Activated T-helper 1 cell treated with anti-CD3 and anti-CD28 coated beads, Interleukin-12 subunit alpha, Interleukin-12 subunit beta, Interleukin-2, Interleukin-4 antibody, amounts not matched to agents 30 ng/mL and 10 ng/mL and 1 ng/mL, durations not matched to agents 14 hours and 24 hours and 36 hours (primary cell): ENCODE measurements at regions of chr18 and their contacts with region 1.

Region 1: DNA sequence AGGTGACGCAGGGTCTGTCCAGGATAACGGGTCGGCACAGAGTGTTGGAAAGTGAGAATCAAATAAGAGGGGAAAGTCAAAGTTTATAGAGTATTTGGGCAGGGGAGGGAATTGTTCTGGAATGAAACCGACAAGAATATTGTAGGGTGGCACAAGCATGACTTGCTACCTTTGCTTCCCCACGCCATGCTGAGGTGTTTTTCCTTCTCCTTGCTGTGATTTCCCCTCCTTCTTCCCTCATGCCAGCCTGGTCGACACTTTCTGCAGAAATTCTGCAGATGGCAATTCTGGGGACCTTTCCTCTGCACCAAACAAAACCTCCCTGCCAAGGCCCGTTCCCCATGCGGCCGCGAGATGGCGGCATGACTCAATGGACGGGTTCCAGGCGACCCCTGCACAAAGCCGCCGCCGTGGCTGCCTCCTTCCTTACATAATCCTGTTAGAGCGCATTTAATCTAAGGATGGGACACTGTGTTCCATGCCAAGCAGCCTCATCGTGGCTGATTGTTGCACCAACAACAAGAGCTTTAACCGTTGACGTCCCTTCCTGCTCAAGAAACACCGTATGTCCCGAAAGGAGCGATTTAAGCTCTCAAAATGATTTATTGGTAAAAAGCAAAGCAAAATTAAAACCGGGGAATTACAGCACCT is at the start of gene MRO:
- DNase-seq: peak; percentile 67
- H3K4me3 Mint-ChIP-seq: no peak within 1 kb of the TSS
- H3K27ac Mint-ChIP-seq: no peak within 1 kb of the TSS
- H3K4me1 Mint-ChIP-seq: no peaks in the 10 kb centered on the region
- H3K27me3 Mint-ChIP-seq: peaks cover 6% of the 10 kb centered on the region
- total RNA-seq, gene MRO: not detected in 2 replicates

Region 2: GRCh38 chr18:50707855-50708469 is 111.9 kb before region 1 on chr18:
- intact Hi-C with region 1: no loop called
- DNase-seq: no peak
- H3K4me3 Mint-ChIP-seq: no peak overlapping the region
- H3K27ac Mint-ChIP-seq: no peak overlapping the region
- H3K4me1 Mint-ChIP-seq: no peaks in the 10 kb centered on the region
- H3K27me3 Mint-ChIP-seq: peaks cover 2% of the 10 kb centered on the region

Region 3: DNA sequence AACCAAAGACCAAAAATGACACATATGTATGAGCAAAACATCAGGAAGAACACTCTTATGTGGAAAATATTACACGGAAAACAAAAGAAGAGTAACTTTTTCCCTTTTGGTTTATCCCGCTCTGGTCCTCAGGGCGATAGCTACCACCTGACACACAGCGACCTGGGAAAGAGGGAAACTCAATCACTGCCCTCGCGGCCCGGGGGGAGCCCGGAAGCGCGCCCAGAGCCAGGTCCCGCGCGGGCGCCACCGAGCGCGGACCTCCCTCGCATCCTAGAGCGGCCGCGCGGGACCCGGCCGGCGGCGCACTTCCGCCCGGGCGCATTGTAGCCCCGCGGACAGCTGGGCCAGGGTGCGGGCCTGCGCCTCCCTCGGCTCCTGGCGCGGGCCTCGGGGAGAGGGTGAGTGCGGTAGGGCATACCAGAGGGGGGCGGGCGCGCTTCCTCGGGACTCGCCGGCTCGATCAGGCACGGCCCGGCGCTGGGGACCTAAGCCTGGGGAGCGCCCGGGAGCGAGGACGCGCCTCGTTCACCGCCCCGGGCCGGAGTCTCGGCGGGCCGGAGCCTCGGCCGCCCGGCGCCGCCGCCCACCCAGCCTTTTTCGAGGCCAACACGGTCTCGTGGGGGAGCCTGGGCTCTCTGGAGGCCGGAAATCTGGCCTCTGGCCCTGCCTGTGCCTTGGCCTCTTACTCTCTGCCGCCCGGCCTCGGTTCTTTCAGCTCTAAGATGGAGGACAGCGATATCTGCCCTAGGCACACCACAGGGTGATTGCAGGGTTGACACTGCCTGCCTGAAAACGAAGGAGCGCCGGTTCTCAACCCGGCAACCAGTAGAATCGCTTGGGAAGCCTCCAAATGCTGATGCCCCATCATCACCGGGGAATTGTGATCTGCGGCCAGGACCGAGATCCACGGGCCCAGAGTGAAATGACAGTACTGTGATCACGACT is 148.1 kb after region 1 on chr18 and contains the start of gene ELAC1:
- intact Hi-C with region 1: loop called (anchors 5 kb)
- DNase-seq: peak; percentile 60
- H3K4me3 Mint-ChIP-seq: peak within 1 kb of the TSS; percentile 96
- H3K27ac Mint-ChIP-seq: peak within 1 kb of the TSS; percentile 94
- H3K4me1 Mint-ChIP-seq: peaks cover 22% of the 10 kb centered on the region
- H3K27me3 Mint-ChIP-seq: peaks cover 2% of the 10 kb centered on the region
- total RNA-seq, gene ELAC1: 6.7 and 7.7 TPM in 2 replicates

Region 4: GRCh38 chr18:51029694-51030536 is 210.1 kb after region 1 on chr18 and contains the start of gene SMAD4:
- intact Hi-C with region 1: loop called (anchors 1 kb)
- DNase-seq: peak; percentile 97
- H3K4me3 Mint-ChIP-seq: peak within 1 kb of the TSS; percentile 99
- H3K27ac Mint-ChIP-seq: peak within 1 kb of the TSS; percentile 96
- H3K4me1 Mint-ChIP-seq: peaks cover 55% of the 10 kb centered on the region
- H3K27me3 Mint-ChIP-seq: no peaks in the 10 kb centered on the region
- total RNA-seq, gene SMAD4: 84.4 and 88.7 TPM in 2 replicates

Region 5: DNA sequence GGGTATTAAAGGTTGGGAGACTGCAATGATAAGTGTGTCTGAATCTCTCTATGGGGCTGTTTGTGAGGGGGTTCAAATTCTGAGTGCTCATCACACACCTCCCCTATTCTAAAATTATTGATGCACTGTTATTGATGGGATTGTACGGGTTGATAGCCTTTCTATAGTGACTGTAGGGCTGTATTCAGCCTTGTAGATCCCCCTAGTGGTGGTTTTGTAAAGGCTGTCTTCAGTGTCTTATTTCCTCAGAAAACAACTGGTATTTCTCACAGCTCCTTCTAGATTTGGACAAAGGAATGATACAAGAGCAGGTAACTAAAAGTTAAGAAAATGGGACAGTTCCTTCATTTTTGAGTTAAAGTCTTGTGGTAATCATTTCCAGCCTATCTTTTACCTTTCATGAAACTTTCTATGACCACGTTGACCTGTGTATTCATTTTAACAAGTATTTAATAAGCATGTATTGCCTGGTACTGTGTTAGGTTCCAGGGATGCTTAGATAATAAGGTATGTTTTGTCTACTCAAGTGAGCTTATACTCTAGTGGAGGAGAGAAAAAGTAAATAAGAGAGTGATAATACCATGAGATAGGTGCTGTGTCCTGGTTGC is 231.4 kb after region 1 on chr18:
- intact Hi-C with region 1: loop called (anchors 1 kb)
- DNase-seq: no peak
- H3K4me3 Mint-ChIP-seq: no peak overlapping the region
- H3K27ac Mint-ChIP-seq: peak overlapping the region; percentile 16
- H3K4me1 Mint-ChIP-seq: peaks cover 39% of the 10 kb centered on the region
- H3K27me3 Mint-ChIP-seq: no peaks in the 10 kb centered on the region

Region 6: DNA sequence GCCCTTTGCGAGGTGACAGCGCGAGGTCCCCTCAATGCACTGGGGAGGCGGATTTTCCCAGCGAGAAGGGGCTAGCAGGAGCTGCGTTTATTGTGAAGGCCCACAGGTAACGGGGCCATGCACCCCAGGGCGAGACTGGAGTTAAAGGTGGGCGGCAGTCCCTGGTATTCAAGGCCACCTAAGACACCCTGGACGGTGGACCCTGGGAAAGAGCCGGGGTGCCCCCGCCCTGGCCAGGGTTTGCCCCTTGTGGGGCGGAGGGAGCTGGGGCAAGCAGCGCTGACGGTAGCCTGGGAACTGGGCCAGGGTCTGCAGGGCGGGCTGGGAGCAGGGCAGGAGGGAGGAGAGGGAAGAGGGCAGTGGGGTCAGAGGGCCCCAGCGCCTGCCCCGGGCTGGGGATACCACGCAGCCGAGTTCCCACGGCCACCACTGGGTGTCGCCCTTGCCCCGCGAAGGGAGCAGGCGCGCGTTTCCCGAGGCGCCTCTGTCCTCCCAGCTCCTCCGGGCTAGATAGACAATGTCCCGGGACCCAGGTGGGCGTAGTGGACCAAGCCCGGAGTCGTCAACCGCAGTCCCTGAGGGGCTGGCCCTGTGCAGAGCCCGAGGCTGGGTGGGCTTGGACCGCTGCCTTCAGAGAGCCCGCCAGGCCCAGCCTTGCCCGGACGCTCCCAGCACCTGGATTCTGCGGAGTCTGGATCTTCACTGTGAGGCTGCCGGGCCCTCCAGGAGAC is 290.4 kb after region 1 on chr18:
- intact Hi-C with region 1: loop called (anchors 2 kb)
- DNase-seq: peak; percentile 57
- H3K4me3 Mint-ChIP-seq: no peak overlapping the region
- H3K27ac Mint-ChIP-seq: no peak overlapping the region
- H3K4me1 Mint-ChIP-seq: peaks cover 22% of the 10 kb centered on the region
- H3K27me3 Mint-ChIP-seq: no peaks in the 10 kb centered on the region